Activated CD4-positive, alpha-beta T cell treated with anti-CD3 and anti-CD28 coated beads for 36 hours (primary cell): ENCODE measurements at regions of chr4 and their contacts with region 1.

Region 1: GRCh38 chr4:123102897-123103471 is 180.6 kb upstream of the NUDT6 start:
- DNase-seq: no peak
- ATAC-seq: peak; percentile 68
- H3K4me3 Mint-ChIP-seq: no peak overlapping the region
- H3K27ac Mint-ChIP-seq: no peak overlapping the region
- H3K4me1 Mint-ChIP-seq: no peaks in the 10 kb centered on the region
- H3K27me3 Mint-ChIP-seq: no peaks in the 10 kb centered on the region

Region 2: DNA sequence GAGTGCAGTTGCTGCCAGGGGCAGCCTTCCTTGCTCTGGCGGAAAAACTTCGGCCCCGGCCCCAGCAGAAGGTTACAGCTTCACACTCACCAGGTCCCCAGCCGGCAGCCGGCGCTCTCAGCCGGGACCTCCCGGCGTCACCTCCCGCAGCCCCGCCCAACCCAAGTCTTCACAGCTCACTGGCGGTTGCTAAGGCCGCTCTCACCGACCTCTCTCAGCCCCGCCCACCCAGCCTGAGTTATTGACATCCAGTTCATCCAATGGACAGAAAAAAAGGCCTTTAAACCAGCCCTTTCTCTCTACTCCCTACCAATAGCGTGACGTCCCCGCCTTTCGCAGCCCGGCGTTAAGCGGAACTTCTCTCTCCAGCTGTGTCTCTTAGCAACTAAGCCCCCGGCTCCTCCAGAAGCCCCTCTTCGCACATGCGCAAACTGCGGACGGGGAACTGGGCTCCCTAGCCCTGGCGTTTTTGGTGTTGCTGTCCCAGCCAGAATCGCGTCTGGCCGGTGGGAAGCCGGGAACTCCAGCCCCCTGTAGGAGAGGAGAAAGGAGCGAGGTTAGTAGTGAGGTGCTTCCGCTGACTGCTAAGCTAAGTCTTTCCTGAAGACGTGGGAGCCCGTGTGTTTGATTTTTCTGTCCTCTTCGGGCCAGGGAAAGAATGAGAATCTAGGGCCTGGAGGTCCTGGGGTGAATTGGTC is 370.5 kb before region 1 on chr4 and contains the start of gene BBS12:
- CTCF ChIA-PET with region 1: no interaction called
- POLR2A ChIA-PET with region 1: no interaction called
- intact Hi-C with region 1: no loop called
- DNase-seq: peak; percentile 99
- ATAC-seq: peak; percentile 100
- H3K4me3 Mint-ChIP-seq: peak within 1 kb of the TSS; percentile 96
- H3K27ac Mint-ChIP-seq: peak within 1 kb of the TSS; percentile 88
- H3K4me1 Mint-ChIP-seq: peaks cover 26% of the 10 kb centered on the region
- H3K27me3 Mint-ChIP-seq: no peaks in the 10 kb centered on the region
- total RNA-seq, gene BBS12: 2.8 to 3.9 TPM

Region 3: DNA sequence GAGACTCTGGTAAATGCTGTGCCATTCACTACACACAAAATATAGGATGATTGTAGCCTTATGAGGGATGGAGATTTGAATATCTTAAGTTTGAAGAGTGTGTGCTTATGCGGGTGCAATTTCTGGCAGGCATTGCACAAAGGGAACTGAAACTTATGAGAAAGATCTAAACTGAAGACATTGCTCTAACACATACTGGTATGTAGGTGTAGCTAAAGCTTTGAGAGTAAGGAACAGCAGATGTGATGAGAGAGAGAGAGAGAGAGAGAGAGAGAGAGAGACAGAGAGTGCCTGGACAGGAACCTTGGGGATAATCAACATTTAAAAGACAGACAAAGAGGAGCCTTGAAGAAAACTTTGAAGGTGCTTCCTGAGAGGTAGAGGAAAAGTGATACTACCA is 673.3 kb after region 1 on chr4:
- CTCF ChIA-PET with region 1: no interaction called
- POLR2A ChIA-PET with region 1: no interaction called
- intact Hi-C with region 1: loop called in 1 of 2 experiments (anchors 2 kb)
- DNase-seq: no peak
- ATAC-seq: peak; percentile 64
- H3K4me3 Mint-ChIP-seq: no peak overlapping the region
- H3K27ac Mint-ChIP-seq: no peak overlapping the region
- H3K4me1 Mint-ChIP-seq: peaks cover 7% of the 10 kb centered on the region
- H3K27me3 Mint-ChIP-seq: no peaks in the 10 kb centered on the region

Region 4: GRCh38 chr4:124111922-124112321 is 1008.9 kb after region 1 on chr4:
- CTCF ChIA-PET with region 1: no interaction called
- POLR2A ChIA-PET with region 1: no interaction called
- intact Hi-C with region 1: loop called in 1 of 2 experiments (anchors 5 kb)
- DNase-seq: no peak
- ATAC-seq: no peak
- H3K4me3 Mint-ChIP-seq: no peak overlapping the region
- H3K27ac Mint-ChIP-seq: no peak overlapping the region
- H3K4me1 Mint-ChIP-seq: no peaks in the 10 kb centered on the region
- H3K27me3 Mint-ChIP-seq: peaks cover 4% of the 10 kb centered on the region